PC-9 (cell line): ENCODE measurements at regions of chr12 and their contacts with region 1.

Region 1: GRCh38 chr12:50222275-50222795 is 55.2 kb upstream of the CERS5 start:
- DNase-seq: no peak
- H3K4me3 ChIP-seq: no peak overlapping the region; the same call in 1 of the 2 replicates
- H3K27ac ChIP-seq: peak overlapping the region; percentile 87
- H3K4me1 ChIP-seq: peaks cover 79% of the 10 kb centered on the region
- H3K27me3 ChIP-seq: no peaks in the 10 kb centered on the region
- CTCF ChIP-seq: no peak

Region 2: GRCh38 chr12:49336645-49337584 is 885.4 kb before region 1 on chr12 and contains the start of gene C1QL4:
- CTCF ChIA-PET with region 1: no interaction called
- POLR2A ChIA-PET with region 1: no interaction called
- intact Hi-C with region 1: no loop called
- DNase-seq: peak in 1 of 2 experiments; percentile 84
- H3K4me3 ChIP-seq: no peak within 1 kb of the TSS
- H3K27ac ChIP-seq: no peak within 1 kb of the TSS
- H3K4me1 ChIP-seq: no peaks in the 10 kb centered on the region
- H3K27me3 ChIP-seq: peaks cover 1% of the 10 kb centered on the region; the same call in 1 of the 2 replicates
- CTCF ChIP-seq: peak; percentile 82
- total RNA-seq, gene C1QL4: 0.18 and 0.22 TPM in 2 replicates

Region 3: DNA sequence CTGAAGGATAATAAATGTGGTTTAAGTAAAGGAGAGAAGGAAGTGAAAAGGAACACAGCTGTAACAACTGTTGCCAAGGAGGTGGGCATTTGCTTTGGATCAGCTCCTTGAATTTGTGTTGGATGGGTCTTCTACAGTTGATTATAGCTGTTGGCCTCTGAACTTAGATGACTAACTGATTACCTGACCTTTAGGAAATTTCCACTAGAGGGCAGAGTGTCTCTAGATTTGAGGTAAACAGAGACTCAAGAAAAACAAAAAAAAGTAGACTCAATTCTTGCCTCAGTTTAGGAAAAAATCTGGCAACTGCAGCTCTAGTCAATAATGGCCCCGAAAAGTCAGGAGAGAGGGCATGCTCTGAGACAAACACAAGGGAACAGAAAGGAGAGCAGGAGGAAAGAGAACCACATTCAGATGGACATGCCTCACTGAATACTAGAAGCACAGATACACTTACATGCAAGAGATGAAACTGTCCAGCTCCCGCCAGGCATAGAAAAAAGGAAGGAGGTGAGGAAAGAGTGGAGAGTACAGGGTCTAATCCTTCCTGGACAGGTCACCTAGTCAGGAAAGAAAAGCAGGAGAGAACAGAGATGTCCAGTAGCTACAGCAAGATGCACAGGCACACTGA is 89.7 kb before region 1 on chr12:
- CTCF ChIA-PET with region 1: no interaction called
- POLR2A ChIA-PET with region 1: no interaction called
- intact Hi-C with region 1: no loop called
- DNase-seq: no peak
- H3K4me3 ChIP-seq: no peak overlapping the region
- H3K27ac ChIP-seq: no peak overlapping the region
- H3K4me1 ChIP-seq: no peaks in the 10 kb centered on the region
- H3K27me3 ChIP-seq: no peaks in the 10 kb centered on the region
- CTCF ChIP-seq: no peak

Region 4: DNA sequence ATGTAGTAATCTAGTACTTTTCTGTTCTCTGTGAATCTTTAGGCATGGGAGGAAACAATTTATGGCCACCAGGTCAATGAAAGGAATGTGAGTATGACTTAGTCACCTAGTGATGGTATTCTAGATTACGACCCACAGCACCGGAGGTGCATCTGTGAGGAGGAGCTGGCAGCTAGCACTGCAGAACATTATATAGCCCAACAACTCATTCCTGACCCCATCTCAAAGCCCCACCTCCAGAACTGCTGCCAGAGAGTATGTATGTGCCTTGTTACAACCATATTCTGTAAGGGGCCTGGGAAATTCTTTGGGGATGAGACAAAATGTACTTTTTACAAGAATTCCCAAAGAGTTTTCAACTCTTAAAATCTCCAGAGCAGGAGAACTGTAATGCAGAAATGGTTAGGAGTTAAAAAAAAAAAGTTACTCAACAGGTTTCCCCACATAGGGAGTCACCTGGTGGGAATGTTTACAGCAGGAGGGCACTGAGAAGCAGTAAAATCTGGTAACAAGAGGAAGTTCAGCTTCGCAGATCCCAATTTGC is 20.3 kb before region 1 on chr12:
- CTCF ChIA-PET with region 1: interaction called, 4 read pairs
- POLR2A ChIA-PET with region 1: interaction called, 8 read pairs
- intact Hi-C with region 1: loop called (anchors 1 kb)
- DNase-seq: peak; percentile 75 to 96
- H3K4me3 ChIP-seq: peak overlapping the region; percentile 54; the same call in 1 of the 2 replicates
- H3K27ac ChIP-seq: peak overlapping the region; percentile 100
- H3K4me1 ChIP-seq: peaks cover 59% of the 10 kb centered on the region
- H3K27me3 ChIP-seq: no peaks in the 10 kb centered on the region
- CTCF ChIP-seq: no peak

Region 5: GRCh38 chr12:50257686-50258551 is 35.6 kb after region 1 on chr12:
- CTCF ChIA-PET with region 1: interaction called, 3 read pairs
- POLR2A ChIA-PET with region 1: interaction called, 24 read pairs
- intact Hi-C with region 1: no loop called
- DNase-seq: no peak
- H3K4me3 ChIP-seq: no peak overlapping the region
- H3K27ac ChIP-seq: peak overlapping the region; percentile 98
- H3K4me1 ChIP-seq: peaks cover 73% of the 10 kb centered on the region
- H3K27me3 ChIP-seq: no peaks in the 10 kb centered on the region
- CTCF ChIP-seq: no peak

Region 6: GRCh38 chr12:50283229-50283923 is 61.0 kb after region 1 on chr12 and contains the start of gene LIMA1:
- CTCF ChIA-PET with region 1: no interaction called
- POLR2A ChIA-PET with region 1: interaction called, 10 read pairs
- intact Hi-C with region 1: loop called (anchors 1 kb)
- DNase-seq: peak; percentile 83 to 96
- H3K4me3 ChIP-seq: peak within 1 kb of the TSS; percentile 97
- H3K27ac ChIP-seq: peak within 1 kb of the TSS; percentile 71
- H3K4me1 ChIP-seq: peaks cover 41% of the 10 kb centered on the region
- H3K27me3 ChIP-seq: no peaks in the 10 kb centered on the region
- CTCF ChIP-seq: peak; percentile 41; the same call in 1 of the 2 replicates
- total RNA-seq, gene LIMA1: 73.1 and 98.6 TPM in 2 replicates

Region 7: GRCh38 chr12:50314629-50315312 is 92.4 kb after region 1 on chr12:
- CTCF ChIA-PET with region 1: no interaction called
- POLR2A ChIA-PET with region 1: interaction called, 3 read pairs
- intact Hi-C with region 1: loop called (anchors 5 kb)
- DNase-seq: peak in 1 of 2 experiments; percentile 17
- H3K4me3 ChIP-seq: no peak overlapping the region
- H3K27ac ChIP-seq: no peak overlapping the region
- H3K4me1 ChIP-seq: peaks cover 11% of the 10 kb centered on the region
- H3K27me3 ChIP-seq: no peaks in the 10 kb centered on the region
- CTCF ChIP-seq: peak; percentile 87